Naive thymus-derived CD8-positive, alpha-beta T cell (primary cell): ENCODE measurements at regions of chr2 and their contacts with region 1.

Region 1: DNA sequence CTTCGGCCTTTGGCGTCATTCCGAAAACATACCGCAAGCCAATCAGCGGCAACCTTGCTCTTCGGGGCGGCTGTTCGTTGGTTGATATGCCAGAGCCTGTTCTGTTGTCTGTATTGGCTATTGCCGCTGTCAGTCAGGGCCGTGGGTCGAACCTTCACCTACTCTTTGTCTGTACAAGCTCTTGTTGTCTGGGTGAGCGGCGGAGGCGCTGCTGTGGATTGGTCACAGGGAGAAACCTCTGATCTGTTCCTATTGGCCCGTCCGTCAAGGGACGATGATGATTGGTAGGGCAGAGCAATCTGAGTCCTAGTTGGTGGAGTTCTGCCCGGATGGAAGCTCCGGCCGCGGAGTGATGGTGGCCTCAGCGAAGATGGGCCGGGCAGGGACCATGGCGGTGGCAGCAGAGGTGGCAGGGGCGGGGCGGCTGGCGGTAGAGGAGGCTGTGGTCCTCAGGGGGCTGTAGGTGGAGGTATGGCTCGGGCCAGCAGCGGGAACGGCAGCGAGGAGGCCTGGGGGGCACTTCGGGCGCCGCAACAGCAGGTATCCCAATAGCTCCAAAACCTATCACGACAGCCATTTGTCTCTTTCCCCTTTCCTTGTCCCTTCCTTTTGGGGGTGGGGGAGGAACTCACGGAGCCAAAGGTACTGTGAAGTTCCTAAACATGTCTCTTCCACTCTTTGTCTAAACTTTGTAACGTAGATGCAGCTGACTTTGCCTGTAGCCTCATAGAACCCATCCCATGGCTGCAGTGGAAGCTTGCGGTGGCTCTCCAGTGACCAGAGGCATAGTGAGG is at the start of gene WBP1:
- DNase-seq: peak; percentile 90 to 100 (median 100)
- ATAC-seq: peak; percentile 83 to 84
- H3K4me3 Mint-ChIP-seq: peak within 1 kb of the TSS; percentile 91 to 100 (median 98)
- H3K27ac Mint-ChIP-seq: peak within 1 kb of the TSS; percentile 94 to 100 (median 100)
- H3K4me1 Mint-ChIP-seq: peaks cover 42 to 73% (median 60%) of the 10 kb centered on the region in 4 donors
- H3K27me3 Mint-ChIP-seq: peaks cover 0 to 2% (median 0%) of the 10 kb centered on the region in 5 donors
- polyA plus RNA-seq, gene WBP1: 32.4 to 38.3 (median 34.2) TPM

Region 2: GRCh38 chr2:74414881-74415761 is 43.2 kb before region 1 on chr2:
- POLR2A ChIA-PET with region 1: interaction called, 15 read pairs
- DNase-seq: peak in 5 of 10 donors; percentile 16 to 65 (median 32)
- ATAC-seq: peak; percentile 45 to 75
- H3K4me3 Mint-ChIP-seq: peak overlapping the region; percentile 55 to 84 (median 75)
- H3K27ac Mint-ChIP-seq: peak overlapping the region in 5 of 10 donors; percentile 21 to 76 (median 57)
- H3K4me1 Mint-ChIP-seq: peaks cover 9 to 37% (median 26%) of the 10 kb centered on the region in 4 donors
- H3K27me3 Mint-ChIP-seq: no peaks in the 10 kb centered on the region

Region 3: DNA sequence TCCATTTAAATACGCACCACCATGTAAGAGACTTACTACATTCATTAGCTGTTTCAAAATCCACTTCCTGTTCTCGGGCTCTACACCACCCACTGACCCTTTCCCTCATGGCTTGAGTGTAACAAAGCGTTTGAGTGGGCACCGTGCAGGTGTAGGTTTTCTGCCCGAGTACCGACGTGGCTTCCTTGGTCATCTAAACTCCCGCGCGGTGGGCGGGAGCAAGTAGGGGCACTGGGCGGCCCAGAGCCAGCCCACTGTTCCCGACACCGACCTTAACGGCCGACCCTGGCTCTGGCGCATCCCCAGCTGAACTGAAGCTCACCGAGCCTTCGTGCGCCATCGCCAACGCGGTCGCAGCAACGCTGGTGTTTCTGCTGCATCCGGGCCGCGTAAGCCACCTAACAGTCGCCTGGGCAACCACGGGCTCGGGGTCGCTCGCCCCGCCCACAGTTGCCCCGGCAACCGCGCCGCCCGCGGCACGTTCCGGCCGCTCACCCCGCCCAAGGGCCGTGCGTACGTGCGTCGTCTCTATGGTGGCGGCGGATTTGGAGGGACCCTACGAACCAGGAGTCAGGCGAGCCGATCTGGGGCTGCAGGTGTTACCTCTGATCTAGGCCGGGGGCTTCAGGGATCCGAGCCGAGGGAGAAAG is 37.0 kb before region 1 on chr2 and contains the starts of genes C2orf81 and WDR54:
- POLR2A ChIA-PET with region 1: interaction called, 22 read pairs
- DNase-seq: peak; percentile 90 to 97 (median 96)
- ATAC-seq: peak; percentile 85 to 87
- H3K4me3 Mint-ChIP-seq: peak within 1 kb of the TSS; percentile 96 to 100 (median 99)
- H3K27ac Mint-ChIP-seq: peak within 1 kb of the TSS; percentile 96 to 100 (median 99)
- H3K4me1 Mint-ChIP-seq: peaks cover 18 to 40% (median 28%) of the 10 kb centered on the region in 4 donors
- H3K27me3 Mint-ChIP-seq: no peaks in the 10 kb centered on the region
- polyA plus RNA-seq, gene C2orf81: 3.2 to 5.3 (median 3.3) TPM
- polyA plus RNA-seq, gene WDR54: 43.9 to 65.1 (median 61.7) TPM

Region 4: GRCh38 chr2:74472086-74472944 is 14.0 kb after region 1 on chr2 and contains the start of gene MRPL53:
- POLR2A ChIA-PET with region 1: interaction called, 172 read pairs
- DNase-seq: peak; percentile 93 to 98 (median 96)
- ATAC-seq: peak; percentile 93 to 94
- H3K4me3 Mint-ChIP-seq: peak within 1 kb of the TSS; percentile 94 to 99 (median 98)
- H3K27ac Mint-ChIP-seq: peak within 1 kb of the TSS; percentile 98 to 100 (median 99)
- H3K4me1 Mint-ChIP-seq: peaks cover 16 to 37% (median 27%) of the 10 kb centered on the region in 4 donors
- H3K27me3 Mint-ChIP-seq: no peaks in the 10 kb centered on the region
- polyA plus RNA-seq, gene MRPL53: 148 to 171 (median 154) TPM

Region 5: GRCh38 chr2:74529357-74530238 is 71.3 kb after region 1 on chr2 and contains the starts of genes AUP1 and HTRA2:
- POLR2A ChIA-PET with region 1: interaction called, 45 read pairs
- DNase-seq: peak; percentile 74 to 91 (median 80)
- ATAC-seq: peak; percentile 90 to 91
- H3K4me3 Mint-ChIP-seq: peak within 1 kb of the TSS; percentile 89 to 96 (median 94)
- H3K27ac Mint-ChIP-seq: peak within 1 kb of the TSS; percentile 78 to 97 (median 94)
- H3K4me1 Mint-ChIP-seq: peaks cover 22 to 50% (median 43%) of the 10 kb centered on the region in 4 donors
- H3K27me3 Mint-ChIP-seq: no peaks in the 10 kb centered on the region
- polyA plus RNA-seq, gene AUP1: 79.5 to 88.9 (median 81.8) TPM
- polyA plus RNA-seq, gene HTRA2: 21.3 to 24.5 (median 24.5) TPM

Region 6: GRCh38 chr2:74553892-74554645 is 95.7 kb after region 1 on chr2 and contains the start of gene LOXL3:
- POLR2A ChIA-PET with region 1: no interaction called
- DNase-seq: peak in 7 of 10 donors; percentile 55 to 85 (median 77)
- ATAC-seq: peak; percentile 56 to 59
- H3K4me3 Mint-ChIP-seq: peak within 1 kb of the TSS; percentile 82 to 98 (median 92)
- H3K27ac Mint-ChIP-seq: peak within 1 kb of the TSS; percentile 58 to 95 (median 90)
- H3K4me1 Mint-ChIP-seq: peaks cover 12 to 27% (median 25%) of the 10 kb centered on the region in 4 donors
- H3K27me3 Mint-ChIP-seq: peaks cover 16 to 39% (median 27%) of the 10 kb centered on the region in 5 donors
- polyA plus RNA-seq, gene LOXL3: 0.06 to 0.15 (median 0.06) TPM